Ovary (tissue), 10 donors: ENCODE measurements at regions of chr2 and their contacts with region 1.

Region 1: DNA sequence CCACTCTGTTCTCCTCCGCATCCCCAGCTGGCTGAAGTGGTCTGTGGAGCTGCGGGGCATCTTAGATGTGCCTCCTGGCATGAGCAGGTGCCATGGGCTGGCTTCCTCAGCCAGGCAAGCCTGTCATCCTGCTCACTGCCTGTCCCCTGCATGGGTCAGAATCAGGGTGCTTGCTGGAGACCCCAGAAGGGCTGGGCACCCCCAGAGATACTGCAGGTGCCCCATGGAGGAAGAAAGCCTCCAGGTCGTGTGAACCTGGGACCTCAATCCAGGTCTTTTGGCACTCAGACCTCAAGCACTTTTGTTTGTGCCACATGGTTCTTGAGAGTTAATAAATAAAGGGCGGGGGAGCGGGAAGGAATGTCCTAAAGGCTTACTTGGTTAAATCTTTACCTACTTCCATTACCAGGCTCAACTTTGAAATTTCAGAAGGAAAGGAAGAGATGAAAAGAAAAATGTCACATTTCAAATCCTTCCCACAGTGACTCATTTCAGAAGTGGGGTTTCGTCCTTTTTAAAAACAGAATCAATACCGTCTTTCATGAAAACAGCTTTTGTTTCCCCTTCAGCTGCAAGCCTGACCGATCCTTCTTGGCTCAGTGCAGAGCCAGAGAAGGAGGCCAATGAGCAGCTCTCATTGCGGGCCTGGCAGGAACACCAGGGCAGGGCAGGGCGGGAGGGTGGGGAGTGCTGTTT is 69.9 kb downstream of the RHOB start:
- DNase-seq: peak in 3 of 5 donors; percentile 26 to 65 (median 43)
- H3K4me3 ChIP-seq: no peak overlapping the region
- H3K27ac ChIP-seq: peak overlapping the region; percentile 8 to 30
- H3K4me1 ChIP-seq: peaks cover 2% of the 10 kb centered on the region
- H3K27me3 ChIP-seq: no peaks in the 10 kb centered on the region
- CTCF ChIP-seq: no peak
- EP300 ChIP-seq: no peak
- POLR2A ChIP-seq: no peak

Region 2: GRCh38 chr2:20264629-20265028 is 252.2 kb before region 1 on chr2:
- intact Hi-C with region 1: no loop called
- DNase-seq: no peak
- H3K4me3 ChIP-seq: no peak overlapping the region
- H3K27ac ChIP-seq: no peak overlapping the region
- H3K4me1 ChIP-seq: no peaks in the 10 kb centered on the region
- H3K27me3 ChIP-seq: no peaks in the 10 kb centered on the region
- CTCF ChIP-seq: no peak
- EP300 ChIP-seq: no peak
- POLR2A ChIP-seq: no peak

Region 3: DNA sequence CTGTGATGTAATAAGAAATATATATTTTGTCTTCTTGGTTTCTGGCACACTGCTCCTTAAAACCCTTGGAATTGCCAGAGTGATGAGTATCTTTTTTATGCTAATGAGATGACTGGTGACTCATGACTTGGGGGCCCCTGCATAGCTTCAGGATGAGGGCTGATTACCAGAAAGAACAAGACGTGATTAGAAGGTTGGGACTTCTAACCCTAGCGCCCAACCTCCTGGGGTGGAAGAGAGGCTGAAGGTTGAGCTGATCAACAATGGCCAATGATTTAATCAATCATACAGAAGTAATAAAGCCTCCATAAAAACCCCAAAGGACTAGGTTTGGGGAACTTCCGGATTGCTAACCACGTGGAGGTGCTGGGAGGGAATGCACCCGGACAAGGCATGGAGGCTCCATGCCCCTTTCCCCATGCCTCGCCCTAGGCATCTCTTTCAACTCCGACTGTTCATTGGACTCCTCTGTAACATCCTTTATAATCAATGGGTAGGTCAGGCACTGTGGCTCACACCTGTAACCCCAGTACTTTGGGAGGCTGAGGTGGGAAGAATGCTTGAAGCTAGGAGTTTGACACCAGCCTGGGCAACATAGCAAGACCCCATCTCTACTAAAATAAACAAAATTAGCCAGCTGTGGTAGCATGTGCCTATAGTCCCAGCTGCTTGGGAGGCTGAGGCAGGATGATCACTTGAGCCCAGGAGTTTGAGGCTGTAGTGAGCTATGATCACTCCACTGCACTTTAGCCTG is 45.1 kb after region 1 on chr2:
- intact Hi-C with region 1: loop called in 1 of 4 experiments (anchors 5 kb)
- DNase-seq: no peak
- H3K4me3 ChIP-seq: no peak overlapping the region
- H3K27ac ChIP-seq: no peak overlapping the region
- H3K4me1 ChIP-seq: no peaks in the 10 kb centered on the region
- H3K27me3 ChIP-seq: no peaks in the 10 kb centered on the region
- CTCF ChIP-seq: no peak
- EP300 ChIP-seq: no peak
- POLR2A ChIP-seq: no peak

Region 4: DNA sequence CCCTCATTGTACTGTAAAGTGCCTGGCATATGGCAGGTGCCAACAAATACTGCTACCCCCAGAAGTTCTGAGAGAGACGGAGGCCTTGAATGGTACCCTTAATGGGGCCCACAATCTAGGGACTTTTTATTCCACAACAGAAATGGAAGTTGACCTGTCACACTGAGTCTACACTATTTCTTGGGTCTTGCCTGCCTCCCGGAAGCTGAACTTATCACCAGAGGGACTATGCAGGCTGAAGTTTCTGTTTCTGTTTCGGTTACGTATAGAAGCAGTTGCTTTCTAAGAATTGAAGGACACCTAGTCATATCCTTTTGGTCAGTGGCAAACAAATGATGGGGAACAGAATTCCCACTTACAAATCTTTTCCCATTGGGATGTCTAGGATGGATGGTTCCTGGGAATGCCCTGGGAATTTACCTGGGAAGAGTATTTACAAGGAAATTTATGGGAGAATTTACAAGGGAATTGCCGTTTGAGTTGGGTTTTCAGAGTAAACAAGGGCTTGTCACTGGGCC is 59.9 kb after region 1 on chr2:
- intact Hi-C with region 1: no loop called
- DNase-seq: no peak
- H3K4me3 ChIP-seq: no peak overlapping the region
- H3K27ac ChIP-seq: no peak overlapping the region
- H3K4me1 ChIP-seq: peaks cover 22% of the 10 kb centered on the region
- H3K27me3 ChIP-seq: no peaks in the 10 kb centered on the region
- CTCF ChIP-seq: no peak
- EP300 ChIP-seq: no peak
- POLR2A ChIP-seq: no peak

Region 5: GRCh38 chr2:20707601-20708000 is 190.8 kb after region 1 on chr2:
- intact Hi-C with region 1: no loop called
- DNase-seq: no peak
- H3K4me3 ChIP-seq: no peak overlapping the region
- H3K27ac ChIP-seq: no peak overlapping the region
- H3K4me1 ChIP-seq: no peaks in the 10 kb centered on the region
- H3K27me3 ChIP-seq: no peaks in the 10 kb centered on the region
- CTCF ChIP-seq: no peak
- EP300 ChIP-seq: no peak
- POLR2A ChIP-seq: no peak